Activated CD8-positive, alpha-beta memory T cell treated with anti-CD3 and anti-CD28 coated beads, Interleukin-2, amount 10 ng/mL, durations not matched to agents 7 days and 5 days (primary cell): ENCODE measurements at regions of chr6 and their contacts with region 1.

Region 1: DNA sequence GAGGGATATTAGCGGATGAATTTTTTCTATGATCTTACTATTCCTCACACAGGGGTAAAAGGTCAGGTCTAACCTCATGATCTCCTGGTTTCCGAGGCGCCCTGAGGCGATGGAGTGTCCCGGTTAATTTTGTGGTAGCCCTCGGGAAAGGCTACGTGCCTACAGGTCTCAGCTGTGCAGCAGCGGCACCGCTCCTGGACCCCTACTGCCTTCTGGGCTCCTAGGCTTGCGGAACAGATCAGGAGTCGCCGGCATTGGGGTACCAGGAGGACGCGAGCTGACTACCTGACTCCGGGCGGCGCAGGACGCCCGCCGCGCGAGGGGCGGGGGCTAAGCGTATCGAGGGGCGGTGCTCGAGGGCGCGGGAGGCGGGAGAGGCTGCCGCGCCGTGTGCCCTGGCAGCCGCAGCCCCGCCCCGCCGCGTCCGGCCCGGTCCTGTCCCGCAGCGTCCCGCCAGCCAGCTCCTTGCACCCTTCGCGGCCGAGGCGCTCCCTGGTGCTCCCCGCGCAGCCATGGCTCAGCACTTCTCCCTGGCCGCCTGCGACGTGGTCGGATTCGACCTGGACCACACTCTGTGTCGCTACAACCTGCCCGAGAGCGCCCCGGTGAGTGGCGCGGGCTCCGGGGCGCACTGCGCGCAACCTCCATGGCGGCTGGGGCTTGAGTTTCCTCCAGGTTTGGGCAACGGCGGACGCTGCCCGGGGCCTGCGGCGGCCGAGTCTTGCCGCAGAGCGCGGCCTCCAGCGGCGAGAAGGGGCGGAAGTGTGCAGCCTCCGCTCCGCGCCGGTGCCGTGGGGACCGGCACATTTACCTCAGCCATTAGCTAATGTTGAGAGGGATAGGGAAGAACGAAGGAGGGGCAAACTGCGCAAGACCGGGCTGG is at the start of gene NT5DC1:
- DNase-seq: peak; percentile 90
- ATAC-seq: peak; percentile 94
- H3K4me3 Mint-ChIP-seq: peak within 1 kb of the TSS; percentile 85
- H3K27ac Mint-ChIP-seq: peak within 1 kb of the TSS; percentile 89
- H3K4me1 Mint-ChIP-seq: peaks cover 47% of the 10 kb centered on the region
- H3K27me3 Mint-ChIP-seq: no peaks in the 10 kb centered on the region
- total RNA-seq, gene NT5DC1: 26.4 to 43.7 TPM

Region 2: DNA sequence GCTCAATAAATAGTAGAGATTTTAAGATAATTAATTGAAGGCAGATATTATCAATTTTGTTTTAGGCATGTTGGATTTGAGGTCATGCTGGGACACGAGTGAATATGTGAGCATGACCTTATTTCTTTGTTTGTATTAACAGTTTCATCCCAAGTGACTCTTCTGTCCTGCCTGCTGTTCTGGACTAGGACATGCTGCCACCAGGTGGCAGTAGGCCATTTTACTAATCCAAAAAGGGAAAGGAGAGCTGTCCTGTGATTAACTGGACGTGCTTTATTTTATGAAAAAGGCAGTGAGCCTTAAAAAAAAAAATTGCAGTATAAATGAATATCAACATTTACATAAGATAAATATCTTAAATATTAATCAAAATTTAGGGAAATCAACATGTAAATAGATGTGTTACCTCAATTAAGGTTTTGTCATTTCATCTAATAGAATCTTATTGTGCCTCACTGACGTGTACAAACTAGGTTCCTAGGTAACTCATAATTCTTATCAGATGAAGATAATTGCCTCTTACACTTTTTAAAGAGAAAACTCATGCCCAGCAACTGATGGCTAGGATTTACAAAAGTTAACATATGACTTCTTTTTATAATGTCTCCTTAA is 89.8 kb before region 1 on chr6:
- CTCF ChIA-PET with region 1: interaction called, 38 read pairs
- DNase-seq: peak; percentile 70
- ATAC-seq: peak; percentile 66
- H3K4me3 Mint-ChIP-seq: no peak overlapping the region
- H3K27ac Mint-ChIP-seq: no peak overlapping the region
- H3K4me1 Mint-ChIP-seq: peaks cover 11% of the 10 kb centered on the region
- H3K27me3 Mint-ChIP-seq: peaks cover 38% of the 10 kb centered on the region

Region 3: GRCh38 chr6:116072368-116072767 is 28.3 kb before region 1 on chr6:
- CTCF ChIA-PET with region 1: no interaction called
- DNase-seq: no peak
- ATAC-seq: no peak
- H3K4me3 Mint-ChIP-seq: no peak overlapping the region
- H3K27ac Mint-ChIP-seq: no peak overlapping the region
- H3K4me1 Mint-ChIP-seq: peaks cover 8% of the 10 kb centered on the region
- H3K27me3 Mint-ChIP-seq: peaks cover 5% of the 10 kb centered on the region